PC-9 (cell line): ENCODE measurements at regions of chr7 and their contacts with region 1.

Region 1: DNA sequence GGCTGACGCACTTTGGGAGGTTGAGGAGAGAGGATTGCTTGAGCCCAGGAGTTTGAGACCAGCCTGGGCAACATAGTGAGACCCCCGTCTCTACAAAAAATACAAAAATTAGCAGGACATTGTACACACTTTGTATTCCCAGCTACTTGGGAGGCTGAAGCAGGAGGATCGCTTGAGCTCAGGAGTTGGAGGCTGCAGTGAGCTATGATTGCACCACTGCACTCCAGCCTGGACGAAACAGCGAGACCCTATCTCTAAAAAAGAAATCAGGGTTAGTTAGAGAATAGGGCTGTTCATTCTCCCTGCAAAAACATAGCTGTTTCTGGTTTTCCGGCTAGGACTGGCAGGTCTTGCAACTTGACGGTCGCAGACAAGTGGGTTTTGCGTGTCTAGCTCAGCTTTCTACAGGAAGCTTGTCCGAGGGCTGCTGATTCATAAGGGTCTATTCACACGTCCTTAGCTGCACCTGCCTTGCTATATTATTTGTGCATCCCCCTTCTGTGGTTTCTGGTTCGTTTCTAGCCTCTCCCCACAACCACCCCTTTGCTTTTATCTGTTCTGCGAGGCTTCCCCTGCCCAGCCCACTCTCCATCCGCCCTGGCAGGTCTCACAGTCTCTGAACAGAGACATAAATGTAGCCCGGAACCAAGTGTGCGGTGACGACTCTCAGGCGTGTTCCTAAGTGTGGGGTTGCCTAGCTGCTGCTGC is 10.7 kb downstream of the AMZ1 start:
- DNase-seq: no peak
- H3K4me3 ChIP-seq: no peak overlapping the region
- H3K27ac ChIP-seq: no peak overlapping the region
- H3K4me1 ChIP-seq: peaks cover 6% of the 10 kb centered on the region
- H3K27me3 ChIP-seq: peaks cover 9% of the 10 kb centered on the region; the same call in 1 of the 2 replicates
- CTCF ChIP-seq: no peak

Region 2: DNA sequence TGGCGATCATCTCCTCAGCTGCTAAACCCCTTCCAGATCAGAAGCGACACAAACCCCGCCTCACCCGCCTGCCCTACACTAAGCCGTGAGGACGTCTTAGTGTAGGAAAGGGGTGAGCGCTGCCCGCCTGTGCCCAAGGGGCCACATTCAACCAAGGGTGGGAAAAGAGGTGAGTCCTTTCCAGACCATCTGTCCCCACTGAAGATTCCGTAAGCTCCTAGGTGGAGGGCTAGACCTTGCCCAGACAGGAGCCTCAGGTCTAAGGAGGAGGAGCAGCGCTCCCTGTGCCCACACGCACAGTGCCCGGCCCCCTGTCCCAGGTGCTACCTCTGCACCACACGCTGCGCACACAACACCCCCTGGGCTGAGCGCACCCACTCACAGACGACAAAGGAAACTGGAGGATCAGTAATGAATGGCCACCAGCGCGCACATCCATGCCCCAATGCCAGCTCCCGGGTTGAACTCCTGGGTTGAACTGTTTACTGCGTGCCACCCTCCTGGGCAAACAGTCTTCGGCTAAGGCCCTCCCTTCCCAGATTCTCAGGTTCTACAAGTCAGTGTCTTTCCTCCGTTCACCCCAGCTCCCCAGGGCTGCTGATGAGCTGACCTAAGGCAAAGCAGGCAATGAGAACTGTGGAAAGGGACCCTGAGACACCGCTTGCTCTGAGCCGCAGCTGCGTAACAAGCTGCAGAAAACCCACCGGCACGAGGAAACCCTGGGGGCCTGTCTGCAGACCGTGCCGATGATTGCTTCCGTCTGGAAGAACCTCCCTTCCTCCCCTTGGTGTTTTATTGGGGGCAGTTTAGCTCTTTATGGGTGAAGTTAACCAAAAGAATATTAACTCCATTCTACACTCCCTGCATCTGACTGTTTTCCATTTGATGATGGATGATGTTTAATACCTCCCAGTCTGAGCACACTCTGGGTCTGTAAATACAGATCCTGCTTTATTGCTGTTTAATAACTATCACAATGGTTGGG is 651.9 kb before region 1 on chr7:
- CTCF ChIA-PET with region 1: no interaction called
- POLR2A ChIA-PET with region 1: interaction called, 16 read pairs
- intact Hi-C with region 1: no loop called
- DNase-seq: no peak
- H3K4me3 ChIP-seq: no peak overlapping the region
- H3K27ac ChIP-seq: no peak overlapping the region
- H3K4me1 ChIP-seq: no peaks in the 10 kb centered on the region
- H3K27me3 ChIP-seq: no peaks in the 10 kb centered on the region
- CTCF ChIP-seq: no peak

Region 3: DNA sequence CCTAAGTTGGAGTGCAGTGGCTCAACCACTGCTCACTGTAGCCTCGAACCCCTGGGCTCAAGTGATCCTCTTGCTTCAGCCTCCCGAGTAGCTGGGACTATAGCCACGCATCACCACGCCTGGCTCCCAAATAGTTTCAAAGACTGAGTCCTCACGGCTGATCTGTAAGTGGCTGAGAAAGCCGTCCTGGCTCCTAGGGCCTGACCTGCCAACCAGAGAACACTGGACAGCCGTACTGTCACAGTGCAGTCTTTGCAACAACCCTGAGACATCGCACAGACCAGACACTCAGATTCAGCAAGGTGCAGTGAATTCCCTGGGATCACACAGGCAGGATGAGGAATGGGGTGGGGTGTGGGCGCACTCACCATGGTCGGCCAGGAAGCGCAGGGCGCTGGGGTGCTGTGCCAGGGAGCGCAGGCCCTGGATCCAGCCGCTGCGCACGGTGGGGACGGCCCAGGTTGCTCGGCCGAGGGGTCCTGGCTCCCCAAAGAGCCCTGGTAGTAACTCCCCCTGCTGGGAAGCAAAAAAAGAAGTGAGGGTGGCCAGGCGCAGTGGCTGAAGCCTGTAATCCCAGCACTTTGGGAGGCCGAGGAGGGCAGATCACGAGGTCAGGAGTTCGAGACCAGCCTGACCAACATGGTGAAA is 154.1 kb before region 1 on chr7:
- CTCF ChIA-PET with region 1: no interaction called
- POLR2A ChIA-PET with region 1: no interaction called
- intact Hi-C with region 1: no loop called
- DNase-seq: no peak
- H3K4me3 ChIP-seq: no peak overlapping the region
- H3K27ac ChIP-seq: no peak overlapping the region
- H3K4me1 ChIP-seq: no peaks in the 10 kb centered on the region
- H3K27me3 ChIP-seq: no peaks in the 10 kb centered on the region
- CTCF ChIP-seq: no peak

Region 4: DNA sequence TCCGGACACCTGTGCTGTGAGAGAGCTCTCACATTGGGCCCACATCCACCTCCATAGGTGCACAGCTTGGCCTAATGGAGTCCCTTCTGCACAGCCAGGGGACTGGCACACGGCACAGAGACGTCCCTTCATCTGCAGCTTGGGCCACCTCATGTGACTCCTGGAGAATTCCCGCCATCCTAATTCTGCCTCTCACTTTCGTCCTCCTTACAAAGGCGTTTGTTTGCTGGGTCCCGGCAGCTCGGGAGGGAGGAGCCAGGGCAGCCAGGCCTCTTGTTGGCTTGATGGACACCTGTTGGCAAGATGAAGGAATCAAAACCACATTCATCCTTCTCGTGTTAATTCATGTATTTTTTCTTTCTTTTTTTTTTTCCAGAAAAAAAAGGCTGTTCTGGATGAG is 97.7 kb before region 1 on chr7:
- CTCF ChIA-PET with region 1: no interaction called
- POLR2A ChIA-PET with region 1: no interaction called
- intact Hi-C with region 1: no loop called
- DNase-seq: no peak
- H3K4me3 ChIP-seq: no peak overlapping the region
- H3K27ac ChIP-seq: no peak overlapping the region
- H3K4me1 ChIP-seq: no peaks in the 10 kb centered on the region; the same call in 1 of the 2 replicates
- H3K27me3 ChIP-seq: no peaks in the 10 kb centered on the region
- CTCF ChIP-seq: no peak